GM10248 (cell line): ENCODE measurements at regions of chr2 and their contacts with region 1.

Region 1: DNA sequence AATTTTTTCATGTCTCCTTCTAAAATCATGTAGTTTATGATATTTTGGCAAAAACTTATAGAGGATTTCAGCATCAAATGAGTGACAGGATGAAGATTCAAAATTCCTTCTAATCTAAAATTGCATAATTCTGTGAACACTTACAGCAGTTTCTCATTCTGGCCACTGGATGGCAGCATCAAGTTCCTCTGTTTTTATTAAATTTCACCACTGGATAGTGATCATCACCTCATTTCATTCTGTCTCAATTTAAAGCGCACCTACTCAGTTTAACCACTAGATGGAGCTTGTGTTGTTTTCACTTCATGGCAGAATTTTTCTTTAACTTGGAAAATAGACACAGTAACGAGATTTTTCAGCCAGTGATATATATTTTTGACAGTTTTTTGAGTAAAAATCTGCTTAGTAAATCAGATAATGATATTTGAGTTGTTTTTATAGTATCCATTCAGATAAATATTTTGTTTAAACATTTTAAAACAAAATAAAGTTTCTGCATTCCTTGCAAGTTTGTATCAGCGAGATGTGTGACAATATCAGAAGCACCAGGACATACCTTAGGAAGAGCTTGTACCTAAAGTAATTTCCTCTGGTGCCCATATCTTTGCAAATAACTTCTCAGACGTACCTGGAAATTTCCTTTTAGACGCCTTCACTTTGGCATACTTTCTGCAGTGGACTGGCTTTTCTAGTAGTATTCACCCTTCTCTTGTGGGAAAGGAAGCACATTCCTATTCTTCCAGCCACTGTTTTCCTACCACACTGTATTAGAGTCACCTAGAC is 94.7 kb upstream of the ARHGAP15 start:
- DNase-seq: peak; percentile 64
- CTCF ChIP-seq: peak; percentile 79

Region 2: GRCh38 chr2:143051465-143051864 is 17.0 kb after region 1 on chr2:
- CTCF ChIA-PET with region 1: interaction called, 15 read pairs
- POLR2A ChIA-PET with region 1: no interaction called
- DNase-seq: no peak
- CTCF ChIP-seq: no peak

Region 3: GRCh38 chr2:143058851-143059250 is 24.4 kb after region 1 on chr2:
- CTCF ChIA-PET with region 1: interaction called, 15 read pairs
- POLR2A ChIA-PET with region 1: no interaction called
- DNase-seq: no peak
- CTCF ChIP-seq: no peak

Region 4: DNA sequence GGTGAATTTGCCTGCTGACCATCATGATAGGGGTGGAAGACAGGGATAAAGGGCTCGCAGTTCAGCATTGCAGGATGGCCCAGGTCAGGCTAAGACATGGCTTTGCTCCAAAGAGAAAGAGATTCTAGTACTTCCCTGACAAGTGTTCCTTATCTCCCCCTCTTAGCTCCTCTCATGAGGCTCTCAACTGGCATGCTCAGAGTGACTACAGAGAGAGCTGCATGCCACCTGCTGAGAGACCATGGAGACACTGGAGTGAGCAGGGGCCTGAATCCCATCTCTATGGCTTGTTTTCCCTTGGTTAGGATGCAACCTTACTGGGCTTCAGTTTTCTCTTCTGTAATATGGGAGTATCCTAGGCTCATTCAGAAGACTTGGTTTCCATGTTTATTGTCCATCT is 189.1 kb after region 1 on chr2:
- CTCF ChIA-PET with region 1: interaction called, 17 read pairs
- POLR2A ChIA-PET with region 1: no interaction called
- DNase-seq: no peak
- CTCF ChIP-seq: no peak

Region 5: DNA sequence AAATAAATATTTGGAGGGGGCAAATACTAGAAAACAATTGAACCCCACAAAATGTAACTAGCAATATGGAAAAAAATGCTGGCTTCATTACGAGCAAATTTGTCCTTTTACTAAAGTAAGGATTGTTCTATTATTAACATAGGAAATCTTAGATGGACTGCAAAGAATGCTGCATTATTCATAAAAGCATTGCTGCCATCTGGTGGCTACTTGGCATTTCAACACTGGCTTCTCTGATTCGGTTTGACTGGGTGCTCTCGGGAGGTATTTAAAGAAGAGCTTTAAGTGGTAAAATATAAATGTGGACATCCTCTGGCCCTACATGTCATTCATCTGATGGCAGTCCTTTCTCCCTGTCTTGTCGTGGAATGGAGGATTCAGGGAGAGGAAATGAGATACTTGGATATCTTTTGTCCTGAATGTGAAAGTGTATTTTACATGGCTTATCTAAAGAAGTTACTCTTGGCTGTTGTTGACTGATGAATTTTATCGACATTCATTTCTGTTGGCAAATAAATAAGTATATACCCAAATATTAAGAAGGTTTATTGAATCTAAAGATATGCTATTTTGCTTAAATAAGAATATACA is 225.0 kb after region 1 on chr2:
- CTCF ChIA-PET with region 1: interaction called, 11 read pairs
- POLR2A ChIA-PET with region 1: no interaction called
- DNase-seq: peak; percentile 13
- CTCF ChIP-seq: peak; percentile 67